Ascending aorta (tissue), 2 donors: ENCODE measurements at regions of chr3 and their contacts with region 1.

Region 1: DNA sequence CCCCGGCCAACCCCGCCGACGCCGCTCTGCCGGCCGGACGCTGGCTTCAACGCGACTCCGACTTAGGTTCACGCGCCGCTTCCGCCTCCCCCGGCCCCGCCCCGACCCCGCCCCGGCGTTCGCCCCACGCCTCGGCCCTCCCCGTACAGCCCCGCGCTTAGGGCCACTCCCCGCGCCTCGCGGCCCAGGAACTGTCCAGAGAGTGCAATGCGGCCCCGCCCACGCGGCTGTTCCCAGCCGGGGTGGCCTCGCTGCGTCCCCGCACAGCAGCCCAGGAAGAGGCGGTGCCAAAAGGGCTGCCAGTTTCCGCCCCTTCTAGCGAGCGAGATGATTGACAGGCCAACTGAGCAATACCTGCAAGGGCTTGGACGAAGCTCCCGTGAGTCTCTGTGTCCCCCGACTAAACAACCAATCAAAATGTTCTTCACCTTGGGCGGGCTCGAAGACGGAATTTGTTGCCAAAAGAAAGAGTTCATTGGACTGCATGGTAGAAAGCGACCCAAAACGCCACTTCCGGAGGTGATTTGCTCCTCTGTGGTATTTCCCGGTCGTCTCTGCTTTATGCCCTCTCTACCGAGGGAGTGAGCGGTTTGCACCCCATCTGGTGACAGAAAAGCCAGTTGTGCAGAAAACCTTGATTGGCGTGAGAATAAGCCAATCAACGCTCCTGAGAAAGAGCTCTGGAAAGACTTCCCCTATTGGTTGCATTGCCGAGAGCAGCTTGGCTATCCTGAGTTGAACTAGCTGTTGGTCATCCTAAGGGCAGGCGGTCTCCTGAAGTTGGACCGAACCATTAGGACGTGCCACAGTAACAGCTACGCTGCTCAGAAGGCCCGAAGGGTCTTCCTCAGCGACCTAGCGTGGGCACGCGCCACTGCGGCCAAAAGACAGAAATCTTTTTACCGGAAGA is at the start of gene UBP1:
- DNase-seq: peak; percentile 99 to 100
- H3K4me3 ChIP-seq: peak within 1 kb of the TSS; percentile 94 to 96
- H3K27ac ChIP-seq: peak within 1 kb of the TSS; percentile 97
- H3K4me1 ChIP-seq: peaks cover 8 to 18% of the 10 kb centered on the region in 2 donors
- H3K27me3 ChIP-seq: no peaks in the 10 kb centered on the region
- CTCF ChIP-seq: no peak
- total RNA-seq, gene UBP1: 55.8 TPM

Region 2: GRCh38 chr3:32106280-32106928 is 1334.2 kb before region 1 on chr3 and contains the start of gene GPD1L:
- intact Hi-C with region 1: loop called (anchors 5 kb)
- DNase-seq: peak; percentile 80 to 97
- H3K4me3 ChIP-seq: peak within 1 kb of the TSS; percentile 87 to 89
- H3K27ac ChIP-seq: peak within 1 kb of the TSS; percentile 70 to 75
- H3K4me1 ChIP-seq: peaks cover 6 to 24% of the 10 kb centered on the region in 2 donors
- H3K27me3 ChIP-seq: no peaks in the 10 kb centered on the region
- CTCF ChIP-seq: peak in 1 of 3 experiments; percentile 7
- total RNA-seq, gene GPD1L: 14.4 TPM

Region 3: DNA sequence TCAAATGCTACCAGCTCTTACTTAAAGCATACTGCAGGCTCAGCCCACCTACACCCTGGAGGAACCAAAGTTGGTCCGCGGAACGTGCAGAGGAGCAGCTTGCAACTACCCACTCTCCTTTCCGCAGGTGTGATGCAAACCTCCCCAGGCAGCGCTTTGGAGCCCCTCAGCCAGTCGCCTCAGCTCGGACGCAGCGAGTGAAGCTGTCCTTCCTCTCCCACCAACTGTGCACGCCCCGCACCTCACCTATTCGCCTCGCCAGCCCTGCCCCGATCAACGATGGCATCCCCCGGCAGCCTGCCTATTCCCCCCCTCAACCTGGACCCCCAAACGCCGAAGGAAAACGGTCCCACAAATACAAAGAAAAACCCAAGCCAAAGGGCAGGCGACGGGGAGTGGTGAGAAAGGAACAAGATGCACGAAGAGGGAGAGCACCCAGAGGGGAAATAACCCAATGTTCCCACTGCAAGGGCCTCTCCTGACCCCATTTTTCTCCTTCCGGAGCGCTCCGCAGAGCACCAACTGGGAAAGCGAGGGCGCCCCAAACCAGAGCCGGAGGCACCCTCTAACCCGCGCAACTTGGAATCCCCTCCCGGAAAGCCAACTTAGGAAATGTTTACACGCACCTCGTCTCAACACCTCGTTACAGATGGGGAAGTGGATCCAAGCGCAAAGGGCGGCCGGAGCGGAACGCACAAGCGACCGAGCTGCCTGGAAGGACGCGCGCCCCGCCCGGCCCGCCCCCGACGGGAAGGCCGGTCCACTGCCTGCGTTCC is 344.3 kb before region 1 on chr3:
- intact Hi-C with region 1: loop called (anchors 5 kb)
- DNase-seq: peak in 1 of 2 donors; percentile 78
- H3K4me3 ChIP-seq: peak overlapping the region; percentile 68 to 91
- H3K27ac ChIP-seq: peak overlapping the region; percentile 93 to 96
- H3K4me1 ChIP-seq: peaks cover 0 to 9% of the 10 kb centered on the region in 2 donors
- H3K27me3 ChIP-seq: no peaks in the 10 kb centered on the region
- CTCF ChIP-seq: no peak

Region 4: DNA sequence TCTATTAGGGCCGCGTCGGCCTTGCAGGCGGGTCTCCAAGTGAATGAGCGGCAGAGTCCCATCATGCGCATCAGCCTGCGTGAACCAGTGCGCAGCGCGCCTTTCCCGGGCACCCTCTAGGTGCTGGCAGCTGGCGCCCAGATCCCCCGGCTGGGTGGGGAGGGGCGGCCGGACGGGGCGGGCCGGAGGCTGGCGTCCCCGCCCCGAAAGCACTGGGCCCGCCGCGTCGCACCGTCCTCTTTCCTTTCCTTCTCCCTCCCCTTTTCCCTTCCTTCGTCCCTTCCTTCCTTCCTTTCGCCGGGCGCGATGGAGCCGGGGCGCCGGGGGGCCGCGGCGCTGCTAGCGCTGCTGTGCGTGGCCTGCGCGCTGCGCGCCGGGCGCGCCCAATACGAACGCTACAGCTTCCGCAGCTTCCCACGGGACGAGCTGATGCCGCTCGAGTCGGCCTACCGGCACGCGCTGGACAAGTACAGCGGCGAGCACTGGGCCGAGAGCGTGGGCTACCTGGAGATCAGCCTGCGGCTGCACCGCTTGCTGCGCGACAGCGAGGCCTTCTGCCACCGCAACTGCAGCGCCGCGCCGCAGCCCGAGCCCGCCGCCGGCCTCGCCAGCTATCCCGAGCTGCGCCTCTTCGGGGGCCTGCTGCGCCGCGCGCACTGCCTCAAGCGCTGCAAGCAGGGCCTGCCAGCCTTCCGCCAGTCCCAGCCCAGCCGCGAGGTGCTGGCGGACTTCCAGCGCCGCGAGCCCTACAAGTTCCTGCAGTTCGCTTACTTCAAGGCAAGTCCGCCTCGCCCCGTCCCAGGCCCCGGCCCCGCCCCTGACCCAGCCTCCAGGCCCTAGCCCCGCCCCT is 326.6 kb before region 1 on chr3 and contains the start of gene CRTAP:
- intact Hi-C with region 1: loop called (anchors 5 kb)
- DNase-seq: peak; percentile 89 to 99
- H3K4me3 ChIP-seq: peak within 1 kb of the TSS; percentile 85 to 92
- H3K27ac ChIP-seq: peak within 1 kb of the TSS; percentile 95 to 96
- H3K4me1 ChIP-seq: peaks cover 6 to 24% of the 10 kb centered on the region in 2 donors
- H3K27me3 ChIP-seq: no peaks in the 10 kb centered on the region
- CTCF ChIP-seq: no peak
- total RNA-seq, gene CRTAP: 300 TPM

Region 5: GRCh38 chr3:33392703-33393125 is 47.9 kb before region 1 on chr3:
- intact Hi-C with region 1: loop called (anchors 2 kb)
- DNase-seq: peak in 1 of 2 donors; percentile 77
- H3K4me3 ChIP-seq: no peak overlapping the region
- H3K27ac ChIP-seq: peak overlapping the region; percentile 33 to 55
- H3K4me1 ChIP-seq: peaks cover 0 to 13% of the 10 kb centered on the region in 2 donors
- H3K27me3 ChIP-seq: no peaks in the 10 kb centered on the region
- CTCF ChIP-seq: no peak

Region 6: GRCh38 chr3:33602829-33603228 is 162.3 kb after region 1 on chr3:
- intact Hi-C with region 1: no loop called
- DNase-seq: no peak
- H3K4me3 ChIP-seq: no peak overlapping the region
- H3K27ac ChIP-seq: no peak overlapping the region
- H3K4me1 ChIP-seq: no peaks in the 10 kb centered on the region
- H3K27me3 ChIP-seq: no peaks in the 10 kb centered on the region
- CTCF ChIP-seq: no peak

Region 7: GRCh38 chr3:33717866-33718594 is 277.5 kb after region 1 on chr3 and contains the start of gene CLASP2:
- intact Hi-C with region 1: loop called (anchors 10 kb)
- DNase-seq: peak; percentile 69 to 95
- H3K4me3 ChIP-seq: peak within 1 kb of the TSS; percentile 77 to 97
- H3K27ac ChIP-seq: peak within 1 kb of the TSS; percentile 98 to 99
- H3K4me1 ChIP-seq: peaks cover 0 to 9% of the 10 kb centered on the region in 2 donors
- H3K27me3 ChIP-seq: no peaks in the 10 kb centered on the region
- CTCF ChIP-seq: peak in 1 of 3 experiments; percentile 8
- total RNA-seq, gene CLASP2: 75.8 TPM